ENCODE measurements at regions of chr11 and their contacts with region 1.

Region 1: DNA sequence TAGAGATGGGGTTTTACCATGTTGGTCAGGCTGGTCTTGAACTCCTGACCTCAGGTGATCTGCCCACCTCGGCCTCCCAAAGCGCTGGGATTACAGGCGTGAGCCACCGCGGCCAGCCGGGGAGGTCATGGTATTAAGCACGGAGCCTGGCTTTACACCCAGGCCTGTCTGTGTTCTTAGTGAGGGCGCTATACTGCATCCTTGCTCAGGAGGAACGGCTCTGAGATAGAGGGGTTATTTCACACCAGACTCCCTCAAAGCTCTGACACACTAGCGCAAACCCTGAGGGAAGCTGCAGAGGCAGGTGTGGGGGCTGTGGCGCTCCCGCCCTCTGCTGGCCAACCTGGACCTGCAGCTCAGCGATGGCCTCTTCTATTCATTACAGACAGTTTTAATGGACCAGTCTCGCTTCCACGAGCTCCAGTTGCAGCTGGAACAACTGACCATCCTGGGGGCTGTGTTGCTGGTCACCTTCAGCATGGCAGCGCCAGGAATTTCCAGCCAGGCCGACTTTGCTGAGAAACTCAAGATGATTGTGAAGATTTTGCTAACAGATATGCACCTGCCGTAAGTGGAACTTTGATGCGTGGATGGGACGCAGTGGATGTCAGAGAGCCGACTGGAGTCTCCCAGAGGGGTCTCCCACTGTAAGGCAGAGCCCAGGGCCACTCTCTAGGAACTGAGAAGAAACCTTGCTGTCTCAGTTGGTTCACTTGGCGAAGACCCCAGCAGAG is 26.2 kb downstream of the TCP11L1 start:
- DNase-seq: peak; percentile 86
- H3K4me3 Mint-ChIP-seq: no peak overlapping the region
- H3K27ac Mint-ChIP-seq: no peak overlapping the region
- H3K4me1 Mint-ChIP-seq: peaks cover 41% of the 10 kb centered on the region
- H3K27me3 Mint-ChIP-seq: peaks cover 1% of the 10 kb centered on the region

Region 2: GRCh38 chr11:32583459-32584271 is 481.9 kb before region 1 on chr11 and contains the start of gene EIF3M:
- CTCF ChIA-PET with region 1: no interaction called
- intact Hi-C with region 1: loop called (anchors 10 kb)
- DNase-seq: peak; percentile 97
- H3K4me3 Mint-ChIP-seq: peak within 1 kb of the TSS; percentile 95
- H3K27ac Mint-ChIP-seq: peak within 1 kb of the TSS; percentile 94
- H3K4me1 Mint-ChIP-seq: peaks cover 38% of the 10 kb centered on the region
- H3K27me3 Mint-ChIP-seq: no peaks in the 10 kb centered on the region
- total RNA-seq, gene EIF3M: 342 to 358 TPM

Region 3: GRCh38 chr11:32821517-32821916 is 244.1 kb before region 1 on chr11:
- CTCF ChIA-PET with region 1: interaction called, 3 read pairs
- intact Hi-C with region 1: loop called (anchors 1 kb)
- DNase-seq: peak; percentile 10
- H3K4me3 Mint-ChIP-seq: no peak overlapping the region
- H3K27ac Mint-ChIP-seq: peak overlapping the region; percentile 4
- H3K4me1 Mint-ChIP-seq: peaks cover 25% of the 10 kb centered on the region
- H3K27me3 Mint-ChIP-seq: no peaks in the 10 kb centered on the region

Region 4: DNA sequence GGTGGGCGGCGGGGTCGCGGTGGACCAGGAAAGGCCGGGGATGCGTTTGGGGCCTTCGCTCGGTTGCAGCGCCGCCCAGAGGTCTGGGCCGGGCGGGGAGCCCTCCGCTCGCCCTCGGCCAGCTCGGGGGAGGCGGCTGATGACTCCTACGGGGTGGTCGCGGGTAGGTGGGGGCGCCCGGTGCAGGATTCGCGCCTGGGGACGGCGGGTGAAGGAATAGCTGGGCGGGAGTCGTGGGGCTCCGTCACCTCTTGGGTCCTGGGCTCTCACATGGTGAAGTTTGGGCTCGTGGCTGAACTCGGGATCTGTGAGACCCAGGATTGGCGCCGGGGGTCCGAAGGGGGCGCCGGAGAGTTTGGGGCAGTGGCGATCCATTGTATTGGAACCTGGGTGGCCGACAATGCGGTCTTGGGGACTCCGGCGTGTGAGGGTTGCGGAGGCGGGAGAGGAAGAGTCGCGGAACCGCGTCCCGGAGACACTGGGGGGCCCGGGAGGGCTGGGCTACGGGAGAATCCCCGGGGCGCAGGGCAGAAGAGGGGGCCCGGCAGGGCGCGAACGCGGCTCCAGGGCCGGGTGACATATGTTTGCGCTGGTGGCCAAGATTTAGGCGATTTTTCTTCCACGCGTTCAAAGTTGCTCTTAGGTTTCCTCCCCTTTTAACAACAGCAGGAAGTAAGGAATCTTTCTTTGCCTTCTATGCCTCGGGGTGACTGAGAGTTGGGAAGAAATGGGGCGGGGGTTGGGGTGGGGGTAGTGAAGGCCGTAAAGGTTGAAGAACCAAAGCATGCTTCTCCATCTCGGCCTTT is 172.1 kb before region 1 on chr11:
- CTCF ChIA-PET with region 1: interaction called, 12 read pairs
- intact Hi-C with region 1: loop called (anchors 1 kb)
- DNase-seq: peak; percentile 63
- H3K4me3 Mint-ChIP-seq: peak overlapping the region; percentile 97
- H3K27ac Mint-ChIP-seq: peak overlapping the region; percentile 96
- H3K4me1 Mint-ChIP-seq: peaks cover 42% of the 10 kb centered on the region
- H3K27me3 Mint-ChIP-seq: no peaks in the 10 kb centered on the region

Region 5: GRCh38 chr11:33015621-33016551 is 49.7 kb before region 1 on chr11 and contains the start of gene DEPDC7:
- CTCF ChIA-PET with region 1: interaction called, 10 read pairs
- intact Hi-C with region 1: loop called (anchors 1 kb)
- DNase-seq: peak; percentile 84
- H3K4me3 Mint-ChIP-seq: peak within 1 kb of the TSS; percentile 84
- H3K27ac Mint-ChIP-seq: no peak within 1 kb of the TSS
- H3K4me1 Mint-ChIP-seq: peaks cover 53% of the 10 kb centered on the region
- H3K27me3 Mint-ChIP-seq: peaks cover 9% of the 10 kb centered on the region
- total RNA-seq, gene DEPDC7: 2.2 to 2.5 TPM

Region 6: GRCh38 chr11:33161120-33162005 is 95.8 kb after region 1 on chr11 and contains the start of gene CSTF3:
- CTCF ChIA-PET with region 1: no interaction called
- intact Hi-C with region 1: loop called (anchors 1 kb)
- DNase-seq: peak; percentile 99
- H3K4me3 Mint-ChIP-seq: peak within 1 kb of the TSS; percentile 100
- H3K27ac Mint-ChIP-seq: peak within 1 kb of the TSS; percentile 99
- H3K4me1 Mint-ChIP-seq: peaks cover 42% of the 10 kb centered on the region
- H3K27me3 Mint-ChIP-seq: no peaks in the 10 kb centered on the region
- total RNA-seq, gene CSTF3: 26.5 to 27.3 TPM